HepG2 (cell line): ENCODE measurements at regions of chr9 and their contacts with region 1.

Region 1: GRCh38 chr9:21812946-21813568 is 10.6 kb downstream of the MTAP start:
- DNase-seq: peak; percentile 51
- ATAC-seq: peak; percentile 91
- H3K4me3 ChIP-seq: no peak overlapping the region
- H3K27ac ChIP-seq: no peak overlapping the region
- H3K4me1 ChIP-seq: 0 out of 2 replicates have a peak, but pooled peaks cover 6% of the 10 kb centered on the region
- H3K27me3 ChIP-seq: no peaks in the 10 kb centered on the region
- CTCF ChIP-seq: peak; percentile 94
- EP300 ChIP-seq: no peak
- POLR2A ChIP-seq: no peak
- RAD21 ChIP-seq: peak; percentile 77

Region 2: DNA sequence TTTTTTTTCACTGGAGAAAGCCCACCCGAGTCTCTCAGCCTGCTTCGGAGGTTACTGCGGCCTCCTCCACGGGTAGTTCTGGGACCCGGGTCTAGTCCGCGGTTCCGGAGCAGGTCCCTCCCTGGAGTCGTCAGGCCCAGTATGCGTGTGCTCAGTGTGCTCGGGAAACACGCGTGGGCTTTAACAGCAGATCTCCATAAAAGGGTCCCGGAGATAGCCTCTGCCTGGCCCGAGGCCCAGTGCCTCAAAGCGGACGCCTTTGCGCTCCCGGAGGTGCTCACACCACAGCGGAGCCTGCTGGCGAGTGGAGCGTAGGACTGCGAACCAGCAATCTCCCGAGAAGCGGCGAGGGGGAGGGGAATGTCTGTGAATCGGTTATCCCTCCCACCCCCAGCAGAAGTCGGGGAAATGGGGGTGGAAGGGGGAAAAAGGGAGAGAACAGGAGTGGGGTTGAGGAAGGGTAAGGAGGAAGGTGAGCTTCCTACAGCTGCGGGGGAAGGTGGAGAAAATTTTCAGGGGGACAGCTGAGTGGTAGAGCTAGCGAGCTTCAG is 152.4 kb after region 1 on chr9:
- CTCF ChIA-PET with region 1: interaction called, 20 read pairs
- POLR2A ChIA-PET with region 1: no interaction called
- in situ Hi-C with region 1: no loop called
- intact Hi-C with region 1: no loop called
- DNase-seq: peak; percentile 45
- ATAC-seq: peak; percentile 100
- H3K4me3 ChIP-seq: peak overlapping the region; percentile 43 to 72 (median 54)
- H3K27ac ChIP-seq: no peak overlapping the region
- H3K4me1 ChIP-seq: peaks cover 12% of the 10 kb centered on the region
- H3K27me3 ChIP-seq: peaks cover 5 to 25% of the 10 kb centered on the region in 2 experiments; a peak in 3 of 5 replicates
- CTCF ChIP-seq: peak; percentile 77
- EP300 ChIP-seq: no peak
- POLR2A ChIP-seq: no peak
- RAD21 ChIP-seq: peak; percentile 55; the same call in 1 of the 2 replicates

Region 3: DNA sequence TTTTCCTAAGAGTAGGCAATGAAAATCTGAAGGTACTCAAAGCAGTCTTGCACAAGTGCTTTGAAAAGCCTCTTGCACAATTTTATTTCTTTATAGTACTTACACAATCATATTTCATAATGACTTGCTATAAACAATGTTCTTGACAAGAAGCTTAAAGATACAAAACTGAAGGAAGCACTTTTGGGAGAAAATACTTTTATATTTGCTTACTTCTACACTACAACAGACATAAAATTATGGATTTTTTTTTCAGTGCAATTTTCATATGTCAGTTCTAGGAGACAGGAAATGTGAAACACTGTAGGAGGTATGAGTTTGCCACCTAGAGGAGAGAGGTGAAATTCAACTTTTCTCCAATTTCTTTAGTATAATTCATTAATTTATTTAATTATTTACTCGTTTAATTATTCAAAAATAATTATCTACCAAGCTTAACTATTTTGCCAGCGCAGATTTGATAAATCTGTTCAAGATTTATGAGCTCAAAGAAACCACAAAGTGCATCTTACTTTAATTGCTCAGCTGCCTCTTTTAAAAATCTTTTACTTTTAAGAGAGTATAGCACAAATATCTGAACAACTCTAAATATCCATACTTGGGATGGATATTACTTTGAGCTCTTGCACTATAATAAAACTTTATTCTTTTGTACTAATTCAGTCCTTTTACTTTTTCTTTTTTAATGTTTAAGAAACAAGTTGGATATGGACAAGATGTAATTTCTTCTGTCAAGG is 225.1 kb after region 1 on chr9:
- CTCF ChIA-PET with region 1: interaction called, 14 read pairs
- POLR2A ChIA-PET with region 1: no interaction called
- in situ Hi-C with region 1: loop called (anchors 10 kb)
- intact Hi-C with region 1: loop called (anchors 1 kb)
- DNase-seq: no peak
- ATAC-seq: no peak
- H3K4me3 ChIP-seq: no peak overlapping the region
- H3K27ac ChIP-seq: no peak overlapping the region
- H3K4me1 ChIP-seq: peaks cover 6% of the 10 kb centered on the region; the same call in 1 of the 2 replicates
- H3K27me3 ChIP-seq: no peaks in the 10 kb centered on the region
- CTCF ChIP-seq: no peak
- EP300 ChIP-seq: no peak
- POLR2A ChIP-seq: no peak
- RAD21 ChIP-seq: no peak

Region 4: DNA sequence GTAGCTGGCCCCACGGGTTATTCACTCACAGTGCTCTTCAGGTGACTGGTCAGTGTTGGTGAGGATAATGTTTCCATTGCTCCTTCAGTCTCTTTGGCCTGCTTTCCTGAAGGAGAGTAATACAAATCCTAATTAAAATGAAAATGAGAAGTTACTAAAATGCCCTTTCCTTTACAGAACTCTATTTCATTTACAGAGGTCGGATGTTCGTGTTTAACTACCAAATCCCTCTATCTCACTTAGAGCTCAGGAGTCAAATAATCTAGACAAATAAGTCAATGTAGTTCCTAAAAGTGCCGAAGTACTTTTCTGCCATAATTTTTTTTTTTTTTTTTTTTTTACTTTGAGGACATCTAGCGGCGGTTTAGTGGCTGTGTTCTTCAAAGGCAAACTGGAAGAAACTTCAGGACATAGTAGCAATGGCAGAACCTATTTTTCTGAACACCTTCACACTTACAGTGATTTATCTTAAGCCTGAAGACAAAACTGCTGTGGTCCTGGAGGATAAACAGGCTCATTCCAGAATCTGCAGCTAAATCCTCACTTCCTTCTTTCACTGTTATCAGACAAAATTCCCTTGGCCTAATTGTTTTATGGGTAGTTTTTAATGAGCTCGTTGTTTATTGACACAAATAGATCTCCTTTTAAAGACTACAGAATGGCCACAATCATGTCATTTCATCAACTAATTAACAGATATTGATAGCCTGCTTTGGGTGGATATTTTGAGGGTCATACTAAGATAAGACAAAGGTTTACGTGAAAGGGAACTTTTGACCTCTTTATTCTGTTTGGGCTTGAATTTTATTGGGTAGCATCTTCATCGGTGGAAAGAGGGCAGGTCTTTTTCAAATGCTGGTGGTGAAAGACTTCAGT is 426.0 kb after region 1 on chr9:
- CTCF ChIA-PET with region 1: interaction called, 27 read pairs
- POLR2A ChIA-PET with region 1: no interaction called
- in situ Hi-C with region 1: loop called (anchors 5 kb)
- intact Hi-C with region 1: loop called (anchors 1 kb)
- DNase-seq: peak; percentile 40
- ATAC-seq: peak; percentile 69
- H3K4me3 ChIP-seq: no peak overlapping the region
- H3K27ac ChIP-seq: no peak overlapping the region
- H3K4me1 ChIP-seq: 0 out of 2 replicates have a peak, but pooled peaks cover 8% of the 10 kb centered on the region
- H3K27me3 ChIP-seq: no peaks in the 10 kb centered on the region
- CTCF ChIP-seq: peak; percentile 32; the same call in 1 of the 2 replicates
- EP300 ChIP-seq: no peak
- POLR2A ChIP-seq: no peak
- RAD21 ChIP-seq: no peak

Region 5: DNA sequence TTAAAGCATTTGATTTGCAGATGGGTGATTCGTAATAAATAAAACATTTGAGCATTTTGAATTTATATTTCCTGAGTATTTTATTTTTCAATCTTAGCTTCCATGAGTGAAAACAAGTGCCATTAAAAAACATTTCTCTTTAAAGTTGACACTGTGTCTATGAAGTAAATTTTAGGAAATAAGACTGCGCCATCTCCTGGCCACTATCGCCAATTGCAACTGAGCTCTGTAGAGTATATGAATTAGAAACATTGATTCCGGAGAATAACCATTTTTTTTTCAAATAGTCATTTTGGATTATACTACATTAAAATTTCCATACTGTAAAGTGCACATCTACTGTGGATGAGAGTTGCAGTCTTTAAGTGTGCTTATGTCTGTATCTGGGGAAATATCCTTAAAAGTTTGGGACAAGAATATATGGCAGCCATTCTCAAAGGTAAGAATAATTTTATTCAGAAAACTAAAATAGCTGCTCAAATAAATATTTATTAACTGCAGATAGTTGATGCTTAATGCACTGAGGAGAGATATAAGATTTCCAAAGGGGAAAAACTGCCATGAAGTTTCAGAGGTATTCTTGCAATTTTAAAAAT is 639.5 kb after region 1 on chr9:
- CTCF ChIA-PET with region 1: interaction called, 7 read pairs
- POLR2A ChIA-PET with region 1: no interaction called
- in situ Hi-C with region 1: loop called (anchors 25 kb)
- intact Hi-C with region 1: loop called (anchors 2 kb)
- DNase-seq: peak; percentile 17
- ATAC-seq: peak; percentile 45; the same call in 1 of the 3 replicates
- H3K4me3 ChIP-seq: no peak overlapping the region
- H3K27ac ChIP-seq: no peak overlapping the region
- H3K4me1 ChIP-seq: no peaks in the 10 kb centered on the region
- H3K27me3 ChIP-seq: peaks cover 1 to 11% of the 10 kb centered on the region in 2 experiments; a peak in 3 of 5 replicates
- CTCF ChIP-seq: peak; percentile 49
- EP300 ChIP-seq: no peak
- POLR2A ChIP-seq: no peak
- RAD21 ChIP-seq: no peak